CD4-positive, alpha-beta memory T cell (primary cell): ENCODE measurements at regions of chr6 and their contacts with region 1.

Region 1: GRCh38 chr6:34757687-34758274 is 476 bp downstream of the SNRPC start:
- DNase-seq: no peak
- H3K4me3 ChIP-seq: peak overlapping the region; percentile 86 to 96
- H3K4me3 Mint-ChIP-seq: no peak overlapping the region
- H3K27ac ChIP-seq: peak overlapping the region; percentile 74
- H3K27ac Mint-ChIP-seq: no peak overlapping the region
- H3K4me1 ChIP-seq: peaks cover 25% of the 10 kb centered on the region
- H3K4me1 Mint-ChIP-seq: peaks cover 6 to 8% (median 6%) of the 10 kb centered on the region in 4 donors
- H3K27me3 ChIP-seq: no peaks in the 10 kb centered on the region
- H3K27me3 Mint-ChIP-seq: no peaks in the 10 kb centered on the region

Region 2: GRCh38 chr6:34332251-34333198 is 425.3 kb before region 1 on chr6:
- CTCF ChIA-PET with region 1: no interaction called
- POLR2A ChIA-PET with region 1: no interaction called
- intact Hi-C with region 1: no loop called
- DNase-seq: no peak
- H3K4me3 ChIP-seq: no peak overlapping the region
- H3K4me3 Mint-ChIP-seq: no peak overlapping the region
- H3K27ac ChIP-seq: no peak overlapping the region
- H3K27ac Mint-ChIP-seq: peak overlapping the region in 2 of 7 donors; percentile 59 to 73
- H3K4me1 ChIP-seq: peaks cover 1% of the 10 kb centered on the region
- H3K4me1 Mint-ChIP-seq: peaks cover 7 to 19% (median 16%) of the 10 kb centered on the region in 4 donors
- H3K27me3 ChIP-seq: no peaks in the 10 kb centered on the region
- H3K27me3 Mint-ChIP-seq: no peaks in the 10 kb centered on the region

Region 3: DNA sequence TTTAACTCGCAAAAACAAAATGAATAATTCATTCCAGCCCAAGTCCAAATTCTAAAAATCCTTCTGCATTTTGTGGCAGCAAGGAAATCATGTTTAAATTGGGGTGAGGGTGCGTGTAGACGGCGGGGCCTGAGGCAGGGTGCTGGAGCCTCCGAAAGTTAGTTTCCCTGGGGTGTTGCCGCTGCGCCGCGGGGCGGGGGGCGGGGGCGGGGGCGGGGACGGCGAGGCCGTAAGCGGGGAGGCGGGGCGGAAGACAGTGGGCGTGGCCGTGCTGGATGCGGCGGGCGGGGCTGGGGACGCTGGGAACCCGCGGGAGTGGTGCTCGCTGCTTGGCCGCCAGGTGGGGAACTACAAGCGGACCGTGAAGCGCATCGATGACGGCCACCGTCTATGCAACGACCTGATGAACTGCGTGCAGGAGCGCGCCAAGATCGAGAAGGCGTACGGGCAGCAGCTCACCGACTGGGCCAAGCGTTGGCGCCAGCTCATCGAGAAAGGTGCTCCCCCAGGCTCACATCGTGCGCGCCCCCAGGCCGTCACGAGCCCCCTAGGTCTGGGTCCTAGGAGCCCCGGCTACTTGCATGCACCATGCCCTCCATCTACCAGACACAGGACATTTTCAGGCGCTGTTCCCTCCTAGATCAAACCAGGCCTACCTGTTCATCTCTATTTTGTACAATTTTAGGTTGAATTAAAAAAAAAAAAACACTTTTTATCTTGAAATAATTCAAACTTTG is 230.6 kb before region 1 on chr6:
- CTCF ChIA-PET with region 1: interaction called, 4 read pairs
- POLR2A ChIA-PET with region 1: no interaction called
- intact Hi-C with region 1: loop called (anchors 1 kb)
- DNase-seq: peak; percentile 93 to 94 (median 93)
- H3K4me3 ChIP-seq: peak overlapping the region in 1 of 2 donors; percentile 20
- H3K4me3 Mint-ChIP-seq: peak overlapping the region in 6 of 8 donors; percentile 57 to 70 (median 64)
- H3K27ac ChIP-seq: no peak overlapping the region
- H3K27ac Mint-ChIP-seq: peak overlapping the region; percentile 27 to 78 (median 68)
- H3K4me1 ChIP-seq: peaks cover 15% of the 10 kb centered on the region
- H3K4me1 Mint-ChIP-seq: peaks cover 5 to 17% (median 7%) of the 10 kb centered on the region in 4 donors
- H3K27me3 ChIP-seq: no peaks in the 10 kb centered on the region
- H3K27me3 Mint-ChIP-seq: no peaks in the 10 kb centered on the region

Region 4: GRCh38 chr6:34656378-34657036 is 101.3 kb before region 1 on chr6:
- CTCF ChIA-PET with region 1: interaction called, 8 read pairs
- POLR2A ChIA-PET with region 1: interaction called, 21 read pairs
- intact Hi-C with region 1: loop called (anchors 2 kb)
- DNase-seq: peak; percentile 26 to 72 (median 33)
- H3K4me3 ChIP-seq: peak overlapping the region; percentile 34 to 37
- H3K4me3 Mint-ChIP-seq: peak overlapping the region; percentile 83 to 96 (median 89)
- H3K27ac ChIP-seq: peak overlapping the region; percentile 67
- H3K27ac Mint-ChIP-seq: peak overlapping the region; percentile 90 to 98 (median 94)
- H3K4me1 ChIP-seq: peaks cover 73% of the 10 kb centered on the region
- H3K4me1 Mint-ChIP-seq: peaks cover 34 to 65% (median 50%) of the 10 kb centered on the region in 4 donors
- H3K27me3 ChIP-seq: no peaks in the 10 kb centered on the region
- H3K27me3 Mint-ChIP-seq: no peaks in the 10 kb centered on the region

Region 5: GRCh38 chr6:34696739-34697543 is 60.8 kb before region 1 on chr6 and contains the start of gene ILRUN:
- CTCF ChIA-PET with region 1: interaction called, 10 read pairs
- POLR2A ChIA-PET with region 1: interaction called, 10 read pairs
- intact Hi-C with region 1: loop called (anchors 1 kb)
- DNase-seq: peak; percentile 92 to 96 (median 93)
- H3K4me3 ChIP-seq: peak within 1 kb of the TSS; percentile 96 to 97
- H3K4me3 Mint-ChIP-seq: peak within 1 kb of the TSS; percentile 95 to 100 (median 98)
- H3K27ac ChIP-seq: peak within 1 kb of the TSS; percentile 98
- H3K27ac Mint-ChIP-seq: peak within 1 kb of the TSS; percentile 93 to 100 (median 100)
- H3K4me1 ChIP-seq: peaks cover 48% of the 10 kb centered on the region
- H3K4me1 Mint-ChIP-seq: peaks cover 32 to 57% (median 45%) of the 10 kb centered on the region in 4 donors
- H3K27me3 ChIP-seq: no peaks in the 10 kb centered on the region
- H3K27me3 Mint-ChIP-seq: peaks cover 0 to 2% of the 10 kb centered on the region in 2 donors
- total RNA-seq, gene ILRUN: 68.6 to 70.7 TPM

Region 6: GRCh38 chr6:34834789-34835518 is 77.2 kb after region 1 on chr6:
- CTCF ChIA-PET with region 1: no interaction called
- POLR2A ChIA-PET with region 1: no interaction called
- intact Hi-C with region 1: no loop called
- DNase-seq: no peak
- H3K4me3 ChIP-seq: no peak overlapping the region
- H3K4me3 Mint-ChIP-seq: no peak overlapping the region
- H3K27ac ChIP-seq: no peak overlapping the region
- H3K27ac Mint-ChIP-seq: no peak overlapping the region
- H3K4me1 ChIP-seq: no peaks in the 10 kb centered on the region
- H3K4me1 Mint-ChIP-seq: peaks cover 0 to 4% (median under 1%) of the 10 kb centered on the region in 4 donors
- H3K27me3 ChIP-seq: no peaks in the 10 kb centered on the region
- H3K27me3 Mint-ChIP-seq: no peaks in the 10 kb centered on the region

Region 7: DNA sequence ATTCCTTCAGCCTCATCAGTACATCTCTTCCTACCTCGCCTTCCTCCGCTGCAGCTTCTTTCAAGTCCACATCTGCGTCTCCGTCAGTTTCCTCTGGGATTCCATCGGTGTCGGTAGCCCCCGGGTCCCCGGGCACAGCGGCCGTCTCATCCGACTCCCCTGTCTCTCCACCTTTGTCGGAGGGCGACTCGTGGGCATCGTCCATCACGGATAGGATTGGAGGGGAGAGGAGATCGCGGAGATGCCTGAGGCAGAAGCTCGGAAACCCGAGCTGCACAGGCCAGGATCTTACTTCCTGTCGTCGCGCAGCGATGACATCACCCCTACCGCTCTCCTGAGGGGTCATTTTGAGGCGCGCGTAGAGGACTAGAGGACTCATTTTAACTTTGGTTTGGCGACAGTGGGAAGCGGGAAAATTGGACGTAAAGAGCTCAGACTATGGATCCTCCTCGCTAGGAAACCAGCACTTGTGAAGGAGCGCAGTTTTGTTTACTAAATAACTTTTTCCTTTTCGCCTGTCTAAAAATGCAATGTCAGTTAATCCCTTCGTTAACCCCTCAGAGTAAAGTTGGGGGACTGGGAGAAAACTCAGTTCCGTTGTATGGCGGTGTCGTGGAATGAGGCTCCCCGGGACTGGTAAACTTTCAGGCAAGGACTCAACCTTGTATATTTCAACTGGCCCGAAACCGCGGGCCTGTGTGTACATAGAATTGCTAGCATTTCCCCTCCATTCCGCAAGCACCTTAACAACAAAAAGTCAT is 130.2 kb after region 1 on chr6 and contains the start of gene TAF11:
- CTCF ChIA-PET with region 1: interaction called, 7 read pairs
- POLR2A ChIA-PET with region 1: interaction called, 49 read pairs
- intact Hi-C with region 1: loop called (anchors 1 kb)
- DNase-seq: peak; percentile 87 to 93 (median 88)
- H3K4me3 ChIP-seq: peak within 1 kb of the TSS; percentile 70 to 91
- H3K4me3 Mint-ChIP-seq: peak within 1 kb of the TSS; percentile 97 to 100 (median 99)
- H3K27ac ChIP-seq: peak within 1 kb of the TSS; percentile 94
- H3K27ac Mint-ChIP-seq: peak within 1 kb of the TSS; percentile 95 to 100 (median 99)
- H3K4me1 ChIP-seq: peaks cover 31% of the 10 kb centered on the region
- H3K4me1 Mint-ChIP-seq: peaks cover 31 to 65% (median 52%) of the 10 kb centered on the region in 4 donors
- H3K27me3 ChIP-seq: no peaks in the 10 kb centered on the region
- H3K27me3 Mint-ChIP-seq: no peaks in the 10 kb centered on the region
- total RNA-seq, gene TAF11: 25.3 to 26.1 TPM

Region 8: GRCh38 chr6:34922177-34922663 is 164.4 kb after region 1 on chr6:
- CTCF ChIA-PET with region 1: no interaction called
- POLR2A ChIA-PET with region 1: no interaction called
- intact Hi-C with region 1: no loop called
- DNase-seq: no peak
- H3K4me3 ChIP-seq: no peak overlapping the region
- H3K4me3 Mint-ChIP-seq: no peak overlapping the region
- H3K27ac ChIP-seq: no peak overlapping the region
- H3K27ac Mint-ChIP-seq: no peak overlapping the region
- H3K4me1 ChIP-seq: no peaks in the 10 kb centered on the region
- H3K4me1 Mint-ChIP-seq: peaks cover 0 to 2% (median 0%) of the 10 kb centered on the region in 4 donors
- H3K27me3 ChIP-seq: no peaks in the 10 kb centered on the region
- H3K27me3 Mint-ChIP-seq: no peaks in the 10 kb centered on the region